ENCODE measurements at regions of chr2 and their contacts with region 1.

Region 1: DNA sequence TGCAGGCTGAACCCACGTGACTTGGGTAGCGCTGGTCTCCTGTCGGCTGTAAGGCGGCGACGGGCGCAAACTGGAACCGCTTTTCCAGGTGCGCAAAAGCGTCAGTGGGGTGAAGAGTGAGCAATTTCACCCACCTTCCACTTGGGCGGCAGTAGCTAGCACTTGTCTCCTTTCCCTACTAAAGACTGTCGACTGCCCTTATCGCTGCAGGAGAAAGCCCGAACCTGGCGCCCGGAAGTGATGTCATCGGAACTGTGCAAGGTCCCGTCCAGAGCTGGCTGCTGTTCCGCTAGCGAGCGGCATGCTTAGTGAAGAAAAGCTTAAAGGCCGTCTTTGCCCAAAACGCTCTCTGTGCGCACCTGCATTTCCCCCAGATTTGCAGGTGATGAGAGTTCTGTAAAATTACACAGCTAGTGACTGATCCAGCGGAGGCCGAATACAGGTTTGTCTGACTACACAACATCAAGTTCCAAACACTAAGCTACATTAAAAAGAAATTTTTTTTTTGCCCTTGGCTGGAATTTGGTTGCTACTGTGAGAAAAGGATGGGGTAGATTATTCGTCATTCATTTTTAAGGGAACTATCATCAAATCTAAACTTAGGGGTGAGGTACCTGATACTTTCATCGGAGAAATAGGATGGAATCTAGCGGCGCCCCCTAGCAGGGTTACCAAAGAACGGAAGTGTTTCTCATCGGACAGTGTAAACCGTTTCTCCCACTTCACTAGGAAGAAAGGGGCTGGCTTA is at the start of gene OSGEPL1:
- DNase-seq: peak; percentile 91
- ATAC-seq: peak; percentile 94
- H3K4me3 ChIP-seq: peak within 1 kb of the TSS; percentile 95
- H3K27ac ChIP-seq: peak within 1 kb of the TSS; percentile 74
- H3K4me1 ChIP-seq: peaks cover 15% of the 10 kb centered on the region
- H3K27me3 ChIP-seq: no peaks in the 10 kb centered on the region
- CTCF ChIP-seq: peak; percentile 79
- total RNA-seq, gene OSGEPL1: 8.1 and 12.6 TPM in 2 replicates

Region 2: DNA sequence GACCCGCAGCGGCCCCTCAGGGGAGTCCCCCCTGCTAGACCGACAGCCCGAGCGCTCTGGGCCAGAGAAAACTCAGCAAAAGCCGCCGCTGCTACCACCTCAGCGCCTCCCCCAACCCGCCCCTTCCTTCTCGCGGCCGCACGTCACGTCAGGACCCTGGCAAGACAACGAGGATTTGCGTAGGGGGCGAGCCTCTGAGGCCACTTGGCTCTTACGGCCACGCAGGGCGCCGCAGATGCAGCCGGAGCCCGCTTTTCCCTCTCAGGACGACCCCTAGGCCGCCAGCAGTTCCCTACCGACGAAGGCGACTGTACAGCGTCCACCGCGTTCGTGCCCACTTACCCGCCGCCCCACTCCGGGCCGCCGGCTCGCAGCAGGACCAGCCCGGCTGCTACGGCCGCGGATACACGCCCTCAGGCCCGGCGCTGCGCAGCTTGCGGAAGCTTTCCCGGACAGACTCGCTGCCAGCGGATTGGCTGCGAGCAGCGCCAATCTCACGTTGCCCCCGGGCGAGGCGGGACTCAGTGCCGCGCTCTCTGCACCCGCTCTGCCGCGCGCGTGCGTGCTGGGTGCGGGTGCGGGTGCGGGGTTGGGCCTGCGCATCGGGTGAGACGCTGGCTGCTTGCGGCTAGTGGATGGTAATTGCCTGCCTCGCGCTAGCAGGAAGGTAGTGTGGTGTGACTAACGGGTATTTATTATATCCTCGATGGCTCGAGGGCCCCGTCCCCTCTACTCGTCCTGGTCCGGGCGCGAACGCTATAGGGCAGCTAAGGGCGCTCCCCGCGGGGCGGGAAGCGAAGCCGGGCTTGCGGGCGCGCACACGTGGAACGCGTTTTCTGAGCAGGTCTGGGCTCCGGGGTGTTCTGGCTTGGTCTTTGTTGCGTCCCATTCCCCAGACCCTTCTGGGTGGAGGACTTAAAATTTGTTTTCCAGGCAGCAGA is 21.5 kb after region 1 on chr2 and contains the starts of genes ORMDL1 and PMS1:
- CTCF ChIA-PET with region 1: no interaction called
- POLR2A ChIA-PET with region 1: interaction called, 3 read pairs
- intact Hi-C with region 1: loop called (anchors 2 kb)
- DNase-seq: peak; percentile 96
- ATAC-seq: peak; percentile 92
- H3K4me3 ChIP-seq: peak within 1 kb of the TSS; percentile 80
- H3K27ac ChIP-seq: peak within 1 kb of the TSS; percentile 71
- H3K4me1 ChIP-seq: peaks cover 19% of the 10 kb centered on the region
- H3K27me3 ChIP-seq: no peaks in the 10 kb centered on the region
- CTCF ChIP-seq: no peak
- total RNA-seq, gene ORMDL1: 44.6 and 64.5 TPM in 2 replicates
- total RNA-seq, gene PMS1: 13.8 and 15.1 TPM in 2 replicates